ENCODE measurements at regions of chr14 and their contacts with region 1.

Region 1: DNA sequence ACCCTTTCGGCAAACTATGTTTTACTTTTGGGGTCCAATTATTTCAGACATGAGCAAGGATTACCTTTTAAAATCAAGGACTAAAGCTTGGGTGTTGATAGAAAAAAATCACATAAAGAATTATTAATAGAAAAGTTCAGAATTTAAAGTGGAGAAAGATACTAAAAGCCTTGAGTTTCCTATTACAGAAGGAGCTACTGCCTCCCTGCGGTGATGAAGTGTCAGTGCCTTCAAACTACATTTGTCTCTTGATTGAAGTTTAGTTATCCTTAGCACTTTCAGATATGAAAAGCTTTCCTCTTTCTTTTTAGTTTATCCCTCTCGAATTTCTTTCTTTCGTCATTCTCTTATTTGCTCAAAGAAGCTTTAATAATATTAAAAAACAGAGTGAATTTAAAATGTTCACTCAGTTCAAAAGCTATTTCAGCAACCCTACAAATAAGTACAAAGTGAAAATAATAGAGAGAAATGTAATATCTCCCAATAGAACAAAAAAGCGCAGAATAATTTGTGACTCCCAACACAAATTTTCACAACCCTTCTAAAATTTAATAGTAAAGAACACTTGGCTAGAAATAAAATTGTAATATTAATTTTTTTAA is 87.6 kb downstream of the SEC23A start:
- DNase-seq: peak in 5 of 10 donors; percentile 27 to 70 (median 52)
- H3K4me3 ChIP-seq: no peak overlapping the region
- H3K27ac ChIP-seq: no peak overlapping the region
- H3K27me3 ChIP-seq: no peaks in the 10 kb centered on the region
- CTCF ChIP-seq: peak; percentile 71 to 98 (median 90)

Region 2: DNA sequence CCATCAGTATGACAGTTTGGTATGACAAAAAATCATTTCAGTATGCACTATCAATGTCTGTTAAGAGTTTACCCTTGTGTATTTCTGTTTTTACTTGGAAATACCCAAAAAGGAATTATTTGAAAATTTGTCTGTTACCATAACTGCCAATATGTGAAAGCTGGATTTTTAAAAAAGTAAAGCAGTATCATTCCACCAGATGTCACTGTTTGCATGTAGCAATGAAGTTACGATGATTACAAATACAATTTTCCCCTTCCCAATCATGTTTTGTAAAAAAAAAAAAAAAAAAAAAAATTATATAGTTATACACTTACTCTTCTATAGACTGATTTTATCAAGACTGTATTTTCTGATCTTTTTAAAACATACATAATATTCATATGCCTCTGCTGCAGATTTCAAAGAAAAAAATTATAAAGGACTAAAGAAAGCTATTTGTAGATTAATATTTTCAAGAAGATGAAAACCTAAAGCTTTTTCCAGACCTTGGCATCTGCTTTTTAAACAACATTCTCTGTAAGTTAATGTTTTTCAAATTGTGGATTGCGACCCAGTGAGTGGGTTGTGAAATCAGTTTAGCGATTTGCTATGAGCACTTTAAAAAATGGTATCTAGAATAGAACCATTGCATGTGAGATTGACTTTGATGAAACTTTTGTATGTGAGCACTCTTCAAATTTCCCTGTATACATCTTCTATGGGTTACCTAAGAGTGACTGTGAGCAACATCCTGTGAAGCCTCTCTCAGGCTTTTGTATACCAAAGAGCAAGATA is 1305.9 kb before region 1 on chr14:
- intact Hi-C with region 1: loop called in 1 of 2 experiments (anchors 10 kb)
- DNase-seq: no peak
- H3K4me3 ChIP-seq: no peak overlapping the region
- H3K27ac ChIP-seq: no peak overlapping the region
- H3K27me3 ChIP-seq: peaks cover 0 to 20% (median 0%) of the 10 kb centered on the region in 45 donors
- CTCF ChIP-seq: peak; percentile 18 to 72 (median 50)

Region 3: DNA sequence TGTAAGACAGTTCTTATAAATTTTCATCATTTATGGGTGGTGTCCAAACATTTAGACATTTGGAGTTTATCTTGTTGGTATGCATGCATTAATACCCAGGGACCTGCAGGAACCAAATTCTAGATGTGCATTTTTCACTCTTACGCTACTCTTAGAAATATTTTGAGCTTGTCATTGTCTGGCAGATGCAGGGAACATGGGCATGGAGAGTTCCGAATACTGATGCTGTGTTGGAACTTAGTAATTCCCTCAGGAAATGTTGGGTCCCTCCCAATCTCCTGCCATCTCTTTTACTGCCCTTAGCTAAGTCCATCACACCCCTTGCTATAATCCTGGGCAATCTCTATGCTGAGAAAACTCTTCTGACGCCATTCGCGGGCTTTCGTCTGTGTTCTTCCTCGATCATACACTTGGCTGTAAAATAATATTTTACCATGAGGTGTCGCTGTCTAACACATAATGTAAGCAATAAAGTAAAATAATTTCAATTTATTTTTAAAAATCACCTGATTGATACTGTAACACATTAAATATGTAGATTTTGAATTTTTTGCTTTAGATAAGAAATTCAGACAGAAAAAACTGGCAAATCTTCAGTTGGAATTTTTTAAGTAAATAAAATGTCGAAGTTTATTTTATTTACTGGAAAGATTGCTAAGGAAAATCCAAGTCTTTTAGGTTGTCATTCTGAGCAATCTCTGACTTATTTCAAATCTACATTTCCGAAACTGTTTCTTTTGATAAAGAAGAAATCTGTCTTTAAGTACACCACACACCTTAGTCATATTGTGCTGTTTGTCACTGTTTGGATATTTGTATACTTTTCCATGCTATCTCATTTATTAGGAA is 1111.9 kb before region 1 on chr14:
- intact Hi-C with region 1: loop called in 1 of 2 experiments (anchors 10 kb)
- DNase-seq: peak in 1 of 10 donors; percentile 21
- H3K4me3 ChIP-seq: peak overlapping the region in 15 of 59 donors; percentile 3 to 42 (median 26)
- H3K27ac ChIP-seq: no peak overlapping the region
- H3K27me3 ChIP-seq: peaks cover 0 to 9% (median 0%) of the 10 kb centered on the region in 45 donors
- CTCF ChIP-seq: peak; percentile 44 to 80 (median 66)

Region 4: GRCh38 chr14:38721822-38722431 is 293.5 kb before region 1 on chr14:
- intact Hi-C with region 1: loop called (anchors 2 to 5 kb)
- DNase-seq: peak in 8 of 10 donors; percentile 37 to 83 (median 53)
- H3K4me3 ChIP-seq: no peak overlapping the region
- H3K27ac ChIP-seq: peak overlapping the region in 3 of 59 donors; percentile 1 to 21 (median 16)
- H3K27me3 ChIP-seq: no peaks in the 10 kb centered on the region
- CTCF ChIP-seq: peak; percentile 64 to 96 (median 87)

Region 5: GRCh38 chr14:38867561-38868150 is 147.8 kb before region 1 on chr14:
- intact Hi-C with region 1: loop called (anchors 5 to 10 kb)
- DNase-seq: peak; percentile 48 to 94 (median 80)
- H3K4me3 ChIP-seq: peak overlapping the region in 3 of 59 donors; percentile 13 to 45 (median 26)
- H3K27ac ChIP-seq: peak overlapping the region in 42 of 59 donors; percentile 0 to 77 (median 62)
- H3K27me3 ChIP-seq: peaks cover 0 to 4% (median 0%) of the 10 kb centered on the region in 45 donors
- CTCF ChIP-seq: peak; percentile 83 to 98 (median 92)

Region 6: GRCh38 chr14:38873941-38874612 is 141.4 kb before region 1 on chr14:
- intact Hi-C with region 1: loop called (anchors 5 to 10 kb)
- DNase-seq: no peak
- H3K4me3 ChIP-seq: no peak overlapping the region
- H3K27ac ChIP-seq: peak overlapping the region in 4 of 59 donors; percentile 2 to 28 (median 11)
- H3K27me3 ChIP-seq: peaks cover 0 to 4% (median 0%) of the 10 kb centered on the region in 45 donors
- CTCF ChIP-seq: no peak

Region 7: DNA sequence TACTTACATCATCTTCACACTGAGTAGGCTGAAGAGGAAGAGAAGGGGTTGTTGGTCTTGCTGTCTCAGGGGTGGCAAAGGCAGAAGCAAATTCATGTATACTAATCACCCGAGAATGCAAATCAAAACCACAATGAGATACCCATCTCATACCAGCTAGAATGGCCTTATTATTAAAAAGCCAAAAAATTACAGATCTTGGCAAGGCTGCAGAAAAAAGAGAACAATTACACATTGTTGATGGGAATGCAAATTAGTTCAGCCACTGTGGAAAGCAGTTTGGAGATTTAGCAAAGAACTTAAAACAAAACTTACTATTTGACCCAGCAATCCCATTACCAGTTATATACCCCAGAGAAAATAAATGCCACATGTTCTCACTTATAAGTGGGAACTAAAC is 67.3 kb before region 1 on chr14:
- intact Hi-C with region 1: loop called in 1 of 2 experiments (anchors 10 kb)
- DNase-seq: no peak
- H3K4me3 ChIP-seq: peak overlapping the region in 55 of 59 donors; percentile 2 to 66 (median 37)
- H3K27ac ChIP-seq: peak overlapping the region; percentile 54 to 97 (median 87)
- H3K27me3 ChIP-seq: no peaks in the 10 kb centered on the region
- CTCF ChIP-seq: peak in 4 of 56 donors; percentile 6 to 33 (median 16)

Region 8: DNA sequence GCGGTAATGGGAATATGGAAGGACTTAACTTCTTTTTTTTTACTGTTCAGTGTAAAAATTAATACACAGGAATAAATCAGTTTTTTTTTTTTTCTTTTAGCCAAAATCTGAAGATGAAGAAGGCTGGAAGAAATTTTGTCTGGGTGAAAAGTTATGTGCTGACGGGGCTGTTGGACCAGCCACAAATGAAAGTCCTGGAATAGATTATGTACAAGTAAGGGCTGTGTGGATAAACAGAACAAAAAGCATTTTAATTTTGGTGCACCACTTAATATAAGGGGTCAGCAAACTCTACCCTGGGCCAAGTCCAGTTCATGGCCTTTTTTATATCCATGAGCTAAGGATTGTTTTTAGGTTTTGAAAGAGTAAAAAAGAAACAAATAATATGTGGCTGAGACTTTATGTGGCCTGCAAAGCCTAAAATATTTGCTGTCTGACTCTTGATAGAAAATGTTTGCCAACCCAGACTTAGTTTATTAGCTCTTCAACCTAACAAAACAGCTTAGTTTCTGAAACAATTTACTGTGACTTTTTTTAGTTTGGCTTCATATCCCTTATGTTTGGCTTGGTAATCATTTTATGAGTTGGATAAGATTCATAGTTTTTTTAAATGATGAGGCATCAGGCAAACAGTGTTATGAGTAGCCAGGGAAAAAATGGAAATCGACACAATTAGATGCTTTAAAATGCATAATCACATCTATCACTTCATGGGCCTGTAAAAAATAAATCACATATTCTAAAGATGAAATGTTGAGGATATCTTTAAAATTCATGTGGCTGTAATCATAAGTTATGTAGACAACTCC is 107.1 kb after region 1 on chr14:
- intact Hi-C with region 1: no loop called
- DNase-seq: no peak
- H3K4me3 ChIP-seq: no peak overlapping the region
- H3K27ac ChIP-seq: no peak overlapping the region
- H3K27me3 ChIP-seq: no peaks in the 10 kb centered on the region
- CTCF ChIP-seq: no peak

Measured in dorsolateral prefrontal cortex (tissue), 120 donors.